Dendritic cell treated with granulocyte-macrophage colony-stimulating factor and Interleukin-4, amounts not matched to agents 40 ng/mL and 50 ng/mL, for 4 days (primary cell): ENCODE measurements at regions of chr11 and their contacts with region 1.

Region 1: GRCh38 chr11:72727521-72727920 is 24.7 kb downstream of the ARAP1 start:
- H3K4me3 Mint-ChIP-seq: peak overlapping the region; percentile 18
- H3K27ac Mint-ChIP-seq: peak overlapping the region; percentile 15
- H3K4me1 Mint-ChIP-seq: peaks cover 89% of the 10 kb centered on the region
- H3K27me3 Mint-ChIP-seq: no peaks in the 10 kb centered on the region

Region 2: DNA sequence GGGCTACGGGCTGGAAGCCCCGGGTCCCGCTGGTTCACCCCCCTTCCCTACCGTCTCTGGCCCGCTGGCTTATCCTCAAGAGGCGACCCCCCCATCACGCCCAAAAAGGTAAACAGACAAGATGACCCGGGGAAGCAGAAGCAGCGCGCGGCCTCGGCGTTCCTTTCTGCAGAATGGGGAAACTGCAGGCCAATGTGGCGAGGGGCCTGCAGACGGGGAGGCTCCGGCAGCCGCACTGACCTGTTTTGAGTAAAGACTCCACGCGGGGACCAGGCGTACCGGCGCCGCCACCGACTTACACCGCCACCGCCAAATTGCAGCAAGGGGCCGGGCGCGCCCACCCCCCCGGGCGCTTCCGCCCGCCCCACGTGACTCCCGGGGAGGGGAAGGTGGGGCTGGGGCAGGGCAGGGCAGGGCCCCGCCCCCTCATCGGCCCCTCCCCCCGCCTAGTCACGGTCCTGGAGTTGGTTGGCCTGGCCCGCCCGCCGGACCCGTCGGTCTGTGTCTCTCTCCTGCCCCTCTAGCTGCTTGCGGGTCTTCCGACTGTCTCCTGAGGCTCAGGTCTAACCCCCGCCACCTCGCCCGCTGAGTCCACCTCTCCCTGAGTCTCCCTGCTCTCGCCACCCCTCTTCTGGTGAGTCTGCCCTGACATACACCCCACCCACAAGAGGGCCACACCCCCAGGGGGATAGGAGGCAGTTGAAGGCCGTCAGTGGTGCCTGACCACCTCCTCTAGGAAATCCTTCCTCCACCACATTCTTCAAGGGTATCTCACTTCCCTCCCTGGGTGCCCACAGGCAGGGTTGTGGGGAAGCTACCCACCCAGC is 24.8 kb after region 1 on chr11 and contains the start of gene ARAP1:
- intact Hi-C with region 1: loop called (anchors 1 kb)
- H3K4me3 Mint-ChIP-seq: peak within 1 kb of the TSS; percentile 89
- H3K27ac Mint-ChIP-seq: peak within 1 kb of the TSS; percentile 90
- H3K4me1 Mint-ChIP-seq: peaks cover 83% of the 10 kb centered on the region
- H3K27me3 Mint-ChIP-seq: peaks cover 8% of the 10 kb centered on the region